Activated CD8-positive, alpha-beta T cell treated with anti-CD3 and anti-CD28 coated beads for 36 hours (primary cell): ENCODE measurements at regions of chr6 and their contacts with region 1.

Region 1: GRCh38 chr6:80214436-80215022 is 108.1 kb downstream of the BCKDHB start:
- DNase-seq: peak; percentile 41
- ATAC-seq: peak; percentile 83
- H3K4me3 Mint-ChIP-seq: no peak overlapping the region
- H3K27ac Mint-ChIP-seq: no peak overlapping the region
- H3K4me1 Mint-ChIP-seq: peaks cover 8% of the 10 kb centered on the region
- H3K27me3 Mint-ChIP-seq: no peaks in the 10 kb centered on the region
- CTCF ChIP-seq: peak; percentile 68

Region 2: GRCh38 chr6:80234401-80234800 is 19.9 kb after region 1 on chr6:
- CTCF ChIA-PET with region 1: interaction called, 11 read pairs
- POLR2A ChIA-PET with region 1: no interaction called
- intact Hi-C with region 1: no loop called
- DNase-seq: no peak
- ATAC-seq: no peak
- H3K4me3 Mint-ChIP-seq: no peak overlapping the region
- H3K27ac Mint-ChIP-seq: no peak overlapping the region
- H3K4me1 Mint-ChIP-seq: no peaks in the 10 kb centered on the region
- H3K27me3 Mint-ChIP-seq: no peaks in the 10 kb centered on the region
- CTCF ChIP-seq: no peak

Region 3: DNA sequence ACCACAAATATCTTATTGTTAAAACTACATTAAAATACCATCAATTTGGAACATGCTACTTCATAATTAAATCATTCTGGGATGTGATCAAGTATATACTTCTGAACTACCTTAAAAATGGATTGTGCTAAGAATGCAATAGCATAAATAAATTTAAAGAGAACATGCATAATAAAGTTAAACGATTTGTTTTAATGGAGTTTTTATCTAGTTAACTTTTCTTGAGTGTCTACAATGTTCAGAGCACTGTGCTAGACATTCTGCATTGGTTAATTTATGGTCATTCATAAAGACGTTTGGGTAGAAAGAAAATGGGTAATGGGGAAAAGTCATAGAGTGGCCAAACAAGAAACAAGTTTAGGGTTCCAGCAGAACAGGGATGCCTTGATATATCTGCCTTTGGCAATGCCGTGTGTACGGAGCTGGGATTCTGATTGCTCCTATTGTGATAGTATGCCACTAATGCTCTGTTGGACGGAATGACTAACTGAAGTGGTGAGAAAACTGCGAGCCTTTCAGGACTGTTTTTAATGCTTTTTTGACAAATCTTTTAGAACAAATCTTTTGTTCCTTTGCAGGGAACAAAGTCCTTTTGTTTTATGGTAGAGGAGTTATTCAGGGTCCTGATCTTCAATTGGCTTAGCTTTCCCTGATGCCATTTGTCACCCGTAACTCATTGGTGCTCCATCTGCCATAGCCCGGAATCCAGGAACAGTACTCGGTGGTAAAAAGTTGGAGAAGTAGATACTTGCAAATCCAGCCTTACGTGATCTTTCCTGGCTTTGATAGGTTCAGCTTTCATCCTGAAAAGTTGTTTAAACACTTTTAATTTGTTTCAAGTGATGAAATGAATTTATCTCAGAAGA is 54.6 kb after region 1 on chr6:
- CTCF ChIA-PET with region 1: no interaction called
- POLR2A ChIA-PET with region 1: no interaction called
- intact Hi-C with region 1: no loop called
- DNase-seq: no peak
- ATAC-seq: no peak
- H3K4me3 Mint-ChIP-seq: no peak overlapping the region
- H3K27ac Mint-ChIP-seq: no peak overlapping the region
- H3K4me1 Mint-ChIP-seq: no peaks in the 10 kb centered on the region
- H3K27me3 Mint-ChIP-seq: no peaks in the 10 kb centered on the region
- CTCF ChIP-seq: no peak